ENCODE measurements at regions of chr18 and their contacts with region 1.

Region 1: GRCh38 chr18:51051105-51051712 is 21.2 kb downstream of the SMAD4 start:
- DNase-seq: peak; percentile 47
- H3K4me3 ChIP-seq: no peak overlapping the region; a peak in 1 of 4 replicates
- H3K27ac ChIP-seq: no peak overlapping the region
- H3K4me1 ChIP-seq: no peaks in the 10 kb centered on the region; a peak in 1 of 4 replicates
- H3K27me3 ChIP-seq: no peaks in the 10 kb centered on the region
- CTCF ChIP-seq: peak; percentile 90
- EP300 ChIP-seq: no peak
- RAD21 ChIP-seq: peak; percentile 77

Region 2: GRCh38 chr18:50819728-50820378 is 231.4 kb before region 1 on chr18 and contains the start of gene MRO:
- CTCF ChIA-PET with region 1: interaction called, 17 read pairs
- POLR2A ChIA-PET with region 1: no interaction called
- DNase-seq: peak; percentile 87
- H3K4me3 ChIP-seq: peak within 1 kb of the TSS; percentile 32 to 54
- H3K27ac ChIP-seq: no peak within 1 kb of the TSS
- H3K4me1 ChIP-seq: peaks cover 0 to 5% of the 10 kb centered on the region in 2 experiments; a peak in 2 of 4 replicates
- H3K27me3 ChIP-seq: no peaks in the 10 kb centered on the region; the same call in 1 of the 2 replicates
- CTCF ChIP-seq: peak; percentile 96
- EP300 ChIP-seq: no peak
- RAD21 ChIP-seq: peak; percentile 97
- polyA plus RNA-seq, gene MRO: not detected in 2 replicates

Region 3: DNA sequence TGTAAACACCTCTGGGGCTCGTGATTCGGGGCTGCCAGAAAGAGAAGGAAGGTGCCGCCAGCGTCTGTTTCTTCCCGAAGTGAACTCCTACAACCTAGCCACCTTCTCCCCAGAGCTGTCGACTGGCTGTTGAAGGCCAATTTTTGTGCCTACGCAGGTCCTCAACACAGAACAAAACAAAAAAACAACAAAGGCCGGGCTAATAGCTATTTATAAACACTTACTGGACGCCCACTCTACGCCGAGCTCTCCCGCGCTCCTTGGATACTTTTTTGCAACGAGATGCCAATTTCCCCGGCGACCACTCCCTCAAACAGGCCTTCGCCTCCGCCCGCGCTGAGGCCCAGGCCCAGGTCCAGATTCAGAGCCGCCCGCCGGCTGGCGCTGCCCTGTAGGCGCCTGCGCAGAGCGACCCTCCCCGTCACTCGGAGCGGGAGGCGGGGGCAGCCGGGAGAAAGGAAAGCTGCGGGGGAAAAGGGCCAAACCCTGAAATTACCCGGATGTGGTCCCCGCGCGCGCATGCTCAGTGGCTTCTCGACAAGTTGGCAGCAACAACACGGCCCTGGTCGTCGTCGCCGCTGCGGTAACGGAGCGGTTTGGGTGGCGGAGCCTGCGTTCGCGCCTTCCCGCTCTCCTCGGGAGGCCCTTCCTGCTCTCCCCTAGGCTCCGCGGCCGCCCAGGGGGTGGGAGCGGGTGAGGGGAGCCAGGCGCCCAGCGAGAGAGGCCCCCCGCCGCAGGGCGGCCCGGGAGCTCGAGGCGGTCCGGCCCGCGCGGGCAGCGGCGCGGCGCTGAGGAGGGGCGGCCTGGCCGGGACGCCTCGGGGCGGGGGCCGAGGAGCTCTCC is 21.3 kb before region 1 on chr18 and contains the start of gene SMAD4:
- CTCF ChIA-PET with region 1: interaction called, 17 read pairs
- POLR2A ChIA-PET with region 1: no interaction called
- DNase-seq: peak; percentile 98
- H3K4me3 ChIP-seq: peak within 1 kb of the TSS; percentile 77 to 87
- H3K27ac ChIP-seq: peak within 1 kb of the TSS; percentile 84 to 97
- H3K4me1 ChIP-seq: peaks cover 13 to 24% of the 10 kb centered on the region in 2 experiments; a peak in 3 of 4 replicates
- H3K27me3 ChIP-seq: no peaks in the 10 kb centered on the region
- CTCF ChIP-seq: no peak
- EP300 ChIP-seq: no peak; a peak in 1 of 4 replicates
- RAD21 ChIP-seq: no peak
- polyA plus RNA-seq, gene SMAD4: 43.3 and 55.3 TPM in 2 replicates

Region 4: DNA sequence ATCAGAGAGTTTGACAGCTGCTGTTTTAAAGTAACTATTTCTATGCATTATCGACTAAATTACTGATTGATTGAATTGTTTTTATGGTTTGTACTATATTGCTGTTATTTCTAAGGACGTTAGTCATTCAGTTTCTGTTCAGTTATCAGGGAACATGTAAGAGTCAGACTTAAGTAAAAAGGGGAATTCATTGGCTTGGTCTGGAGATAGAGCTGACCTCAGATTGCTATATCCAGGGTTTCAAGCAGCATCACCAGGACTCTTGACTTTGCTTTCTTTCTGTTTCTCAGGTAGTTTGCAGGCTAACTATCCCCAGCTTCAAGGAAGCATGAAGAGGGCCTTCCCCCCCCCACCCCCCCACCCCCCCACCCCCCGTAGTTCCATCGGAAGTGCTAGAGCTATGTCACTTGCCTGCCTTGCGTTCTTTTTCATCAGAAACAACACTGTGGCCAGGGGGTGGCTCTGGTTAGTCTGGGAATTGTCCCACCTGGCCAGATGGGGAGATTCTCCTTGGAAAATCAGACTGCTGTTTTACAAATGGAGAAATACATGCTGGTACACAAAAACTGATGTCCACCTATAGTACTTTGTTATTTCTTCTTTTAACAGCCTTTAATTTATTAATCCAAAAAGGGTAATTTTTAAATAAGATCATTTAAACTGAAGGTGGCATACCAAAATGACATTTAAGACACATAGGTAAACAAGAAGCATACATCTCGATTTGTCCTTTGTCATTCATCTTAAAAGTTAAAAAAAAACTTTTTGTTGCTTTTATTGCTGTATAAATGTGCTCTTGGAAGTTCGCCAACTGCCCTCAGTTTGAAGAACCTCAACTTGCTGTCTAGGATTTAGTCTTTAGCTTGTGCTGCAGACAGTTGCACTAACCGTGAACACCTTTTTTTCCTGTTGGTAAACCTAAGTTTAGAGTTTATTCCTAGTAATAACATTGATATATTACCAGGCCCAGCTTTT is 11.8 kb before region 1 on chr18:
- CTCF ChIA-PET with region 1: interaction called, 17 read pairs
- POLR2A ChIA-PET with region 1: no interaction called
- DNase-seq: peak; percentile 14
- H3K4me3 ChIP-seq: no peak overlapping the region
- H3K27ac ChIP-seq: no peak overlapping the region
- H3K4me1 ChIP-seq: peaks cover 2 to 16% of the 10 kb centered on the region in 2 experiments; a peak in 2 of 4 replicates
- H3K27me3 ChIP-seq: no peaks in the 10 kb centered on the region
- CTCF ChIP-seq: no peak
- EP300 ChIP-seq: no peak
- RAD21 ChIP-seq: no peak

Region 5: GRCh38 chr18:51137051-51137729 is 86.0 kb after region 1 on chr18:
- CTCF ChIA-PET with region 1: no interaction called
- POLR2A ChIA-PET with region 1: no interaction called
- DNase-seq: no peak
- H3K4me3 ChIP-seq: no peak overlapping the region
- H3K27ac ChIP-seq: no peak overlapping the region
- H3K4me1 ChIP-seq: no peaks in the 10 kb centered on the region
- H3K27me3 ChIP-seq: no peaks in the 10 kb centered on the region
- CTCF ChIP-seq: no peak
- EP300 ChIP-seq: no peak
- RAD21 ChIP-seq: no peak

Measured in SK-N-SH (cell line).